Activated T-helper 1 cell treated with anti-CD3 and anti-CD28 coated beads, Interleukin-12 subunit alpha, Interleukin-12 subunit beta, Interleukin-2, Interleukin-4 antibody, amounts not matched to agents 30 ng/mL and 10 ng/mL and 1 ng/mL, durations not matched to agents 14 hours and 24 hours and 36 hours (primary cell): ENCODE measurements at regions of chr14 and their contacts with region 1.

Region 1: GRCh38 chr14:60561845-60562746 is 53.1 kb downstream of the SIX6 start:
- DNase-seq: no peak
- H3K4me3 Mint-ChIP-seq: no peak overlapping the region
- H3K27ac Mint-ChIP-seq: no peak overlapping the region
- H3K4me1 Mint-ChIP-seq: no peaks in the 10 kb centered on the region
- H3K27me3 Mint-ChIP-seq: peaks cover 8% of the 10 kb centered on the region

Region 2: DNA sequence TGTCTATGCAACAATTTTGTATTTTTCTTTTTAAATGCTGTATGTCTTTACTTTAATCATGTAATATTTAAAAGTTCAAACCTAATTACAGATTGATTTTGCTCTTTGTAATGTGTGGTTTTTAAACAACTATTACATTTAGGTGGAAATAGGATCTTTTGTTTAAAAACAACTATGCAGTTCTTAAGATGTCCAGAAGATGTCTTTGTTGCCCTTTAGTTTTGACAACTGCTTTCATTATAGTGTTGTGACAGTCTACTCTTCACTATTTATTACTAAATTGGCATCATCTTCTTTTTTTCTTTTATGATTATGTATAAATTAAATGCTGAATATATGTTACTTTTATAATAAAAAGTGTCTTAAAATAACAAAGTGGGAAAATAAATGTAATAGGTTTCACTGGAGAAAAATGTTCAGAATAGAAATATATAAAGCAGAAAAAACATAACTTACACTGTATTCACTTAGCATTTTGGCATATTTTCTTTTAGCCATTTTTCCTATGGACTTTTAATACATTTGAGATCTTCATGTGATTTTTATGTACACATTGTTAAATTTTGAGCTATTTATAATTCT is 497.5 kb before region 1 on chr14:
- intact Hi-C with region 1: loop called (anchors 5 kb)
- DNase-seq: no peak
- H3K4me3 Mint-ChIP-seq: no peak overlapping the region
- H3K27ac Mint-ChIP-seq: no peak overlapping the region
- H3K4me1 Mint-ChIP-seq: no peaks in the 10 kb centered on the region
- H3K27me3 Mint-ChIP-seq: peaks cover 9% of the 10 kb centered on the region

Region 3: GRCh38 chr14:60266021-60266937 is 295.8 kb before region 1 on chr14:
- intact Hi-C with region 1: loop called (anchors 5 kb)
- DNase-seq: no peak
- H3K4me3 Mint-ChIP-seq: no peak overlapping the region
- H3K27ac Mint-ChIP-seq: no peak overlapping the region
- H3K4me1 Mint-ChIP-seq: peaks cover 13% of the 10 kb centered on the region
- H3K27me3 Mint-ChIP-seq: no peaks in the 10 kb centered on the region

Region 4: DNA sequence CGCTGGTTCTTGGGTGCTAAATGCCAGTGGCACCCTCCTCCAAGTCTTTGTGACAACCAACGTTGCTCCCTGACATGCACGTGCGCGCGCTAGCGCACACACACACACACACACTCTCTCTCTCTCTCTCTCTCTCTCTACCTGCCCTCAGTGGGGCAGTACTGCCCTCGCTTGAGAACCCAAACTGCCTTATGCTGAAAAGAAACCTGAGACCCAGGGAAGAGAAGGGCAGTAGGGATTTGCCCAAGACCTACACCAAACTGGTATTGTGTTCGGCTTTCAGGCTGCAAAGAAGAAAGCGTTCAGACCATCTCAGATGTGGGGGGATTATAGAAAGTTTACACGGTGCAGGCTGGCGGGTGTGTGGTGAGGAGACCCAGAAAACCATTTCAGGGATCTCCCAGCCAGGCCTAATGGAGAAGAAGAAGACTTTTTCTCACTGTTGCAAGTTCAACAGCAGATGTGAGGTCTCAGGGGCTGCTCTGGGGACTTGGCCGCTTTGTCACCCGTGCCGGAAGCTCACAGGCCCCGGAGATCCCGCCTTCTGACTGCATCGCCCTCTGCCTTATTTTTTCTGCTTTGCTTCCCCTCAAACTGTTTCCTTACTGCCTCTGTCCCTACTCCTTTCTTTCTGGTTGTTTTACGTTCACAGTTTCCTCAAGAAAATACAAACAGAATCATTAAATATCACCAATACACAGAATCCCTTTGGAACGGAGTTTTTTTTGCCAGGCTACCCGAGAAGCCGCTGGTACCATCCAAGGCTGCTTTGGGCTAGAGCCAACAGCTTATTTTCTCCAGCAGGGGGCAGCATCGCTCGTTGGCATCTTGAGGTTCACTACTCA is 230.7 kb before region 1 on chr14:
- intact Hi-C with region 1: loop called (anchors 1 kb)
- DNase-seq: peak; percentile 60
- H3K4me3 Mint-ChIP-seq: peak overlapping the region; percentile 92
- H3K27ac Mint-ChIP-seq: peak overlapping the region; percentile 94
- H3K4me1 Mint-ChIP-seq: peaks cover 45% of the 10 kb centered on the region
- H3K27me3 Mint-ChIP-seq: peaks cover 37% of the 10 kb centered on the region

Region 5: DNA sequence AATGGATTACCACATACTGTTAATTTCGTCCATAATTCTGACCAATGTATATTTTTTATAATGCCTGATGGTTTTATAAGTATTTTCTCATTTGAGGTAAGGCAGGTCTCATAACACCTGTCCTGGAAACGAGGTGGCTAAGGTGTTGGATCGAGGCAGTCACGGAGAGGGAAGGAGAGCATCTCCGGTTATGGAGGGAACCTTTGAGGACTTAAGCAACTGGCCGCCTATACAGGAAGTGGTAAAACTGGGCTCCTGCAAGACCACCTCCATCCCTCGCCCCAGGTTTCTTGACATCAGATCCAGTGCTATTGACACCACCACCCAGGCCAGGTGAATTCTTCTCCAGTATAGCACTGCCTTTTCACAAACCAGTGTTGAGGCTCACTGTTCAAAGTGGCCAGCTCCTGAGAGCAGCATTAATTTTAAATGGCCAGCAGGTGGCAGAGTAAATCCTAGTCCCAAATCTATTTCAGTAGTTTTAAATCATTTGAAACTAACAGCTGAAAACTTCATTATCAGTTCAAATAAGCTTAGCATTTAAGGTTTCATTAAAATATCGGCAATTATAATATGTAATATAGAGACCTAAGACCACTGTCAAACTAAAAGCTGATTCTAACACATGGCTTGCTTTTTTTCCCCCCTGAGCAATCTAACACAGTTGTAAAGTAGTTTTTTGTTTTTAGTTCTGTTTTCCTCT is 212.3 kb before region 1 on chr14:
- intact Hi-C with region 1: loop called (anchors 1 kb)
- DNase-seq: no peak
- H3K4me3 Mint-ChIP-seq: no peak overlapping the region
- H3K27ac Mint-ChIP-seq: no peak overlapping the region
- H3K4me1 Mint-ChIP-seq: no peaks in the 10 kb centered on the region
- H3K27me3 Mint-ChIP-seq: peaks cover 23% of the 10 kb centered on the region